Gastrocnemius medialis (tissue), 4 donors: ENCODE measurements at regions of chr16 and their contacts with region 1.

Region 1: DNA sequence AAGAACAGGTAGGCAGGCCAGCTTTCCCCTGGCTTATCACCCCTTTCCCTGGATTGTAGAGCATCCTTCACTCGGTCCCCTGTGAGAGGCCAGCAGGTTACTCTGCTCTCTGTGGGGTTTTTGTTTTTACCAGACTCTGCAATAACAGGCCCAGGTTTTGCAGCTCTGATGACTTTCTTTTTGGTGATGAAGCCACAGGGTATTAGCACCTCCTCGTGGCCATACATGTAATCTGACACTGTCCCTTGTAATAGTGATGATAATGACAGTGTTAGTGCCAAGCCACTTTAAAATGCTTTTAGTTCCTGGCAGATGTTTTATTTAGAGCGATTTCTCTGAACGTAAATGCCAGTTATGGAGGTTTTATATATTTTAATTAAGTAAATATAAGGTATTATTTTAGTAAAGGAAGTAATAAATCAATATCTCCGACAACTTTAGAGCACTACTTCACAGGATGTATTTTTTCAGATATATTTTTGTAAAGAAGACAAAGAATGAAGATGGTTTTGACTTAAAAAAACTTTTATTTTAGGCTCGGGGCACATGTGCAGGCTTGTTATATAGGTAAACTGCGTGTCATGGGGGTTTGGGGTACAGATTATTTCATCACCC is 38.0 kb upstream of the CPHXL start:
- DNase-seq: no peak
- ATAC-seq: peak; percentile 50 to 71
- H3K4me3 ChIP-seq: no peak overlapping the region
- H3K27ac ChIP-seq: no peak overlapping the region
- H3K4me1 ChIP-seq: no peaks in the 10 kb centered on the region
- H3K27me3 ChIP-seq: no peaks in the 10 kb centered on the region
- CTCF ChIP-seq: peak in 4 of 5 experiments; percentile 24 to 58 (median 48)
- POLR2A ChIP-seq: no peak

Region 2: GRCh38 chr16:75218256-75219070 is 545.8 kb before region 1 on chr16 and contains the start of gene CTRB1:
- in situ Hi-C with region 1: loop called in 1 of 4 experiments (anchors 25 kb)
- intact Hi-C with region 1: no loop called
- DNase-seq: no peak
- ATAC-seq: no peak
- H3K4me3 ChIP-seq: no peak within 1 kb of the TSS
- H3K27ac ChIP-seq: peak within 1 kb of the TSS in 1 of 4 donors; percentile 67
- H3K4me1 ChIP-seq: no peaks in the 10 kb centered on the region
- H3K27me3 ChIP-seq: no peaks in the 10 kb centered on the region
- CTCF ChIP-seq: no peak
- POLR2A ChIP-seq: no peak
- total RNA-seq, gene CTRB1: not detected

Region 3: GRCh38 chr16:75471723-75472633 is 292.3 kb before region 1 on chr16:
- in situ Hi-C with region 1: loop called in 3 of 4 experiments (anchors 5 to 10 kb)
- intact Hi-C with region 1: loop called (anchors 5 kb)
- DNase-seq: peak; percentile 37 to 39
- ATAC-seq: peak; percentile 97 to 99
- H3K4me3 ChIP-seq: no peak overlapping the region
- H3K27ac ChIP-seq: no peak overlapping the region
- H3K4me1 ChIP-seq: no peaks in the 10 kb centered on the region
- H3K27me3 ChIP-seq: no peaks in the 10 kb centered on the region
- CTCF ChIP-seq: peak; percentile 58 to 76 (median 72)
- POLR2A ChIP-seq: no peak